ENCODE measurements at regions of chr2 and their contacts with region 1.

Region 1: DNA sequence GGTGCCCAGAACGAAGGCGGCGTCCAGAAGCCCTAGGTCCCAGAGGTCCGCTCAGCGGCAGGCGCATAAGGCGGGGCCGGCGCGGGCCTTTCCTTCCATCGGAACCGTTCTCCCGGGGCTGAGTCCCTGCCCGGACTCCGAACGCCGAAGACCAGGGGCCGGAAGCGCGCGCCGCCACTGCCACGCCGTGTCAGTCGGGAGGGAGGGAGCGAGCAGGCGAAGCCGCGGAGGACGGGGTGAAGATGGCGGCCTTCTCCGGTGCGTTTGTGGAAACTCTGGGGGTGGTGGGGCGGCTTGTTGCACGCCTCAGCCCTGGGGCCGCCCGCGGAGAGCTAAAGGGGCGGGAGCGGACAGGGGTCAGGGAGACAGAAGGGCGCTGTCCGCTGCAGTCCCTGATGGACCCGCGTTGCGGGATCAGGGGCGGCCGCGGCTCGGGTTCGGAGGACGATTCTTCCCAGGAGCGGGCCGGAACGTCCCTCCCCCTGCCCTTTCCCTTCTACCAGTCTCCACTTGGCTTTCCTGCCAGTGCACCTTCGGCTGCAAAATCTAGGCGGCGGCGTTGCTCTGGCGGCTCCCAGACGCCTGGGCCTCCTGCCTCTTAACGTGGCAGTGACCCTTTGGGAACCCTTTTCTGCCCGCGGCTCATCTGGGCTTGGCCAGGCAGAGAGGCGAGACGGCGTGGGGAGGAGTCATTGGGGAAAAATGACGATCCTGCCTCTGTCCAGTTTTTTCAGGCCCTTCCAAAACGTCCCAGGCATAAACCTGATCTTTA is at the start of gene DDX1:
- DNase-seq: peak; percentile 78 to 98 (median 88)

Region 2: DNA sequence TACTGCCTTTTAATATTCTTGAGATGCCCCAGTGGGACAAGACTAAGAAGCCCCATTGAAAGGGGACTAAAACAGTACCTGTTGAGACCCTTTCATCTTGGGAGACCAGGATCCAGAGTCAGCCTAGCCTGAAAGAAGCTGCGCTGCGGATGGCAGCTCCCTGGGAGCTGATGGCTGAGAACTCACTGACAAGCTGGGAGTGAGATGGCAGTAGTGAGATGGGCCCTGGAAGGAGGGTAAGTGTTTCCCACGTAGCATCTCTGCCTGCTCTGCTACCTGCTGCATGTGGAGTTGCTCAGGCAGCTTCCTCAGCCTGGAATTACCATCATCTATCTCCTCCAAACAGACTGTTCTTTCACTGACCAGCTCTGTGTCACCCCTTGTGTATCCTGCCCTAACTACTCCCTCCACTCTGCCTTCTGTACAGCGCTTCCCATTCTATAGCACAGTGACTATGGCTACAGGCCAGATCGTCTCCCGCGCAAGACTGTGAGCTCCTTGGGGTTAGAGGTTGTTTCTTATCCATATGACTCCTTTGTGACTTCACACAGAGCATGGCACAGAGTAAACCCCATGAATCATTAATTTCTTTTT is 361.2 kb before region 1 on chr2:
- intact Hi-C with region 1: no loop called
- DNase-seq: no peak

Region 3: GRCh38 chr2:15435474-15435873 is 156.4 kb before region 1 on chr2:
- intact Hi-C with region 1: no loop called
- DNase-seq: no peak

Region 4: DNA sequence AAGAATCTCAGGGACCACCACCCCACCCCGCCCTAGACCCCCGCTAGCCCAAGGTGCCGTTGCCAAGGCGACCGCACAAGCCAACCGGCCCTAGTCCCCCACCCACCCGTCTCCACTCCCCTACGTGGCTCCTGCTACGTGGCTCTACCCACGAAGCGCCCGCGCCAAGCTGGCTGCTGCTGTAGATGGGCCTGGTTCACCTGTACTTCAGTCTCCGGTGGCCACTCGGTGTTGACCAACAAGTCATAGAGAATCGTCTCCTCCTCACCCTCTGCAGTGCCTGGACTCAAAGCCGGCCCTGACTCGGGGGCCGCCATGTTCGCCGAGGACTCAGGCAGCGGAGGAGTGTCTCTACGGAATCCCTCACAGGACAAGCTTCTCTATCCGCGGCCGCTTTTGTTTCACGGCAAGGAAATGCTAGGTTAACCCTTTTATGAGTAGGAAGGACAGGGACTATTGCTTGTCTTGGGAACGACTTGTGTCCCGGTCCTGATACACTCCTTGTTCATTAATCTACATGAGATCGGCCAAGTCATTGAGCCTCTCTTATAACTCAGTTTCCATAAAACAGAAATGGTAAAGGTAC is 30.8 kb before region 1 on chr2 and contains the start of gene NBAS:
- intact Hi-C with region 1: loop called (anchors 1 kb)
- DNase-seq: peak; percentile 80 to 97 (median 84)